ENCODE measurements at regions of chr2 and their contacts with region 1.

Region 1: GRCh38 chr2:101818531-101819451 is 121.3 kb downstream of the MAP4K4 start:
- DNase-seq: peak; percentile 89
- ATAC-seq: peak; percentile 50
- H3K4me3 ChIP-seq: no peak overlapping the region
- H3K27ac ChIP-seq: peak overlapping the region; percentile 53; the same call in 1 of the 2 replicates
- H3K4me1 ChIP-seq: peaks cover 40% of the 10 kb centered on the region
- H3K27me3 ChIP-seq: no peaks in the 10 kb centered on the region
- CTCF ChIP-seq: no peak
- POLR2A ChIP-seq: no peak
- RAD21 ChIP-seq: no peak

Region 2: DNA sequence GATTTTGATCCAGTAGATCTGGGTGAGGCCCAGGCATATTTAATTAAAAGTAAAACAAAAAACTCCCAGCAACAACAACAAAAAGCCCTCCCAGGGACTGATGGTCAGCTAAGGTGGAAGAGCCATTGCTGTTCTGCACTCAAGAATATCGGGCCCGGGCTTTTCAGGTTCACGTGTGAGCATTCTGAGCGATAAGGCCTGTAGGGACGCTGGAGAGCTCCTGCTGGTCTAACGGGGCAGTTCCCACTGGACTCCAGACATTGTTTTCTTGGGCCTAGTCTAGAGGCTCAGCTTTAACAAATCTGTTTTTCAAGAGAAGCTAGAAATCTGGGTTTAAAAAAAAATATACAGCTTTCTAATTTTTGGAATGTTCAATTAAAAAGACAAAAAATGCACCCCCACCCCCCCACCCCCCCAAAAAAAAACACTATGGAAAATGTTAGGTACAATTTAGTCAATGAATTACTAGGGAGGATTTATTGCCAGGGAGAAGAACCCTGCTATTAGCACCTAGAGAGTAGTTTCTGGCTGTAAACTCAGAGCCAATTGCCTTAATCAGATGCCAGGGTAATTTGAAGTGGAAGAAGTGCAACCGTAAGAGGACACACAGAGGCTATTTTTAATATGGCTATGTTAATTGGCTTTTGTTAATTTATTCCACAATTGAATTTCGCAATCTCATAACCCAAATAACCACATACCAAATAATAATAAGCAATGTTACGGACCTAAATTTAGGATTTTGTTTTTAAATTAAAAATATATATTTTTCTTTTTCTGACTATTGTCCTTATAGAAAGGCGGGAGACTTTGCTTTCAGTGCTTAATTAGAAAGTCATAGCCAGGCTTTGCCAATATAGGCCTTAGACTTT is 42.4 kb before region 1 on chr2:
- CTCF ChIA-PET with region 1: no interaction called
- POLR2A ChIA-PET with region 1: no interaction called
- dilution Hi-C with region 1: no loop called
- in situ Hi-C with region 1: no loop called
- intact Hi-C with region 1: loop called (anchors 5 kb)
- DNase-seq: no peak
- ATAC-seq: no peak
- H3K4me3 ChIP-seq: no peak overlapping the region
- H3K27ac ChIP-seq: no peak overlapping the region
- H3K4me1 ChIP-seq: peaks cover 25% of the 10 kb centered on the region
- H3K27me3 ChIP-seq: no peaks in the 10 kb centered on the region
- CTCF ChIP-seq: peak; percentile 22; the same call in 1 of the 2 replicates
- POLR2A ChIP-seq: no peak
- RAD21 ChIP-seq: 0 out of 2 replicates have a peak, but pooled peaks have one; percentile 7

Region 3: GRCh38 chr2:101805152-101806088 is 13.4 kb before region 1 on chr2:
- CTCF ChIA-PET with region 1: interaction called, 4 read pairs
- POLR2A ChIA-PET with region 1: no interaction called
- dilution Hi-C with region 1: no loop called
- in situ Hi-C with region 1: no loop called
- intact Hi-C with region 1: loop called (anchors 2 kb)
- DNase-seq: peak; percentile 83
- ATAC-seq: peak; percentile 55
- H3K4me3 ChIP-seq: no peak overlapping the region
- H3K27ac ChIP-seq: peak overlapping the region; percentile 61
- H3K4me1 ChIP-seq: peaks cover 25% of the 10 kb centered on the region
- H3K27me3 ChIP-seq: no peaks in the 10 kb centered on the region
- CTCF ChIP-seq: no peak
- POLR2A ChIP-seq: no peak
- RAD21 ChIP-seq: no peak

Measured in IMR-90 (cell line).